ENCODE measurements at regions of chr6 and their contacts with region 1.

Region 1: DNA sequence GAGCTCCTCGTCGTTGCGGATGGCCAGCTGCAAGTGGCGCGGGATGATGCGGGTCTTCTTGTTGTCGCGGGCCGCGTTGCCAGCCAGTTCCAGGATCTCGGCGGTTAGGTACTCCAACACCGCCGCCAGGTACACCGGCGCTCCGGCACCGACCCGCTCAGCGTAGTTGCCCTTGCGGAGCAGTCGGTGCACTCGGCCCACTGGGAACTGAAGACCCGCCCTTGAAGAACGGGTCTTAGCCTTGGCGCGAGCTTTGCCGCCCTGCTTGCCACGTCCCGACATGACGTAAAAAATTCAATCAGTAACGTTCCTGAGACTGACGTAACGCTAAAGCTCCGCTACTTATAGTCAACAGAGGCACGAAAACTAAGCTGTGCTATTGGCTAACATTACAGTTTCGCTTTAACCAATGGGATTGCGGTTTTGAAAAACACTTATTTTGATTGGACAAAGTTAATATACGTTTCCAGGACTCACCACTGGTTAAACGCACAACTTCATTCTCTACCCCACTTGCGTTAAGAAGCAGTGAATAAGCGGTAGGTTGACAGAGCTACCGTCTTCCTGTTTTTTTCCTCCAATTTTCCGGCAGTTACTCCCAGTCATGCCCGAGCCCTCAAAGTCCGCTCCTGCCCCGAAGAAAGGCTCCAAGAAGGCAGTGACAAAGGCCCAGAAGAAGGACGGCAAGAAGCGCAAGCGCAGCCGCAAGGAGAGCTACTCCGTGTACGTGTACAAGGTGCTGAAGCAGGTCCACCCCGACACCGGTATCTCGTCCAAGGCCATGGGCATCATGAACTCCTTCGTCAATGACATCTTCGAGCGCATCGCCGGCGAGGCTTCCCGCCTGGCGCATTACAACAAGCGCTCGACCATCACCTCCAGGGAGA is 73.9 kb downstream of the OR2B2 start:
- DNase-seq: peak; percentile 91 to 94 (median 92)
- H3K4me3 ChIP-seq: peak overlapping the region; percentile 63 to 67
- H3K4me3 Mint-ChIP-seq: no peak overlapping the region
- H3K27ac ChIP-seq: peak overlapping the region; percentile 93
- H3K27ac Mint-ChIP-seq: no peak overlapping the region
- H3K4me1 ChIP-seq: peaks cover 30% of the 10 kb centered on the region
- H3K4me1 Mint-ChIP-seq: peaks cover 6 to 20% (median 12%) of the 10 kb centered on the region in 4 donors
- H3K27me3 ChIP-seq: no peaks in the 10 kb centered on the region
- H3K27me3 Mint-ChIP-seq: peaks cover 2 to 3% of the 10 kb centered on the region in 2 donors

Region 2: GRCh38 chr6:26054857-26055669 is 1783.2 kb before region 1 on chr6:
- CTCF ChIA-PET with region 1: no interaction called
- POLR2A ChIA-PET with region 1: interaction called, 22 read pairs
- intact Hi-C with region 1: no loop called
- DNase-seq: peak; percentile 89 to 96 (median 91)
- H3K4me3 ChIP-seq: peak overlapping the region; percentile 67 to 78
- H3K4me3 Mint-ChIP-seq: peak overlapping the region; percentile 93 to 96 (median 94)
- H3K27ac ChIP-seq: peak overlapping the region; percentile 84
- H3K27ac Mint-ChIP-seq: peak overlapping the region; percentile 91 to 98 (median 98)
- H3K4me1 ChIP-seq: peaks cover 24% of the 10 kb centered on the region
- H3K4me1 Mint-ChIP-seq: peaks cover 7 to 34% (median 15%) of the 10 kb centered on the region in 4 donors
- H3K27me3 ChIP-seq: no peaks in the 10 kb centered on the region
- H3K27me3 Mint-ChIP-seq: no peaks in the 10 kb centered on the region

Region 3: GRCh38 chr6:26223650-26224546 is 1614.4 kb before region 1 on chr6:
- CTCF ChIA-PET with region 1: no interaction called
- POLR2A ChIA-PET with region 1: interaction called, 16 read pairs
- intact Hi-C with region 1: no loop called
- DNase-seq: peak; percentile 74 to 87 (median 84)
- H3K4me3 ChIP-seq: peak overlapping the region; percentile 45 to 82
- H3K4me3 Mint-ChIP-seq: no peak overlapping the region
- H3K27ac ChIP-seq: peak overlapping the region; percentile 69
- H3K27ac Mint-ChIP-seq: no peak overlapping the region
- H3K4me1 ChIP-seq: peaks cover 21% of the 10 kb centered on the region
- H3K4me1 Mint-ChIP-seq: peaks cover 6 to 8% (median 7%) of the 10 kb centered on the region in 4 donors
- H3K27me3 ChIP-seq: no peaks in the 10 kb centered on the region
- H3K27me3 Mint-ChIP-seq: no peaks in the 10 kb centered on the region

Region 4: DNA sequence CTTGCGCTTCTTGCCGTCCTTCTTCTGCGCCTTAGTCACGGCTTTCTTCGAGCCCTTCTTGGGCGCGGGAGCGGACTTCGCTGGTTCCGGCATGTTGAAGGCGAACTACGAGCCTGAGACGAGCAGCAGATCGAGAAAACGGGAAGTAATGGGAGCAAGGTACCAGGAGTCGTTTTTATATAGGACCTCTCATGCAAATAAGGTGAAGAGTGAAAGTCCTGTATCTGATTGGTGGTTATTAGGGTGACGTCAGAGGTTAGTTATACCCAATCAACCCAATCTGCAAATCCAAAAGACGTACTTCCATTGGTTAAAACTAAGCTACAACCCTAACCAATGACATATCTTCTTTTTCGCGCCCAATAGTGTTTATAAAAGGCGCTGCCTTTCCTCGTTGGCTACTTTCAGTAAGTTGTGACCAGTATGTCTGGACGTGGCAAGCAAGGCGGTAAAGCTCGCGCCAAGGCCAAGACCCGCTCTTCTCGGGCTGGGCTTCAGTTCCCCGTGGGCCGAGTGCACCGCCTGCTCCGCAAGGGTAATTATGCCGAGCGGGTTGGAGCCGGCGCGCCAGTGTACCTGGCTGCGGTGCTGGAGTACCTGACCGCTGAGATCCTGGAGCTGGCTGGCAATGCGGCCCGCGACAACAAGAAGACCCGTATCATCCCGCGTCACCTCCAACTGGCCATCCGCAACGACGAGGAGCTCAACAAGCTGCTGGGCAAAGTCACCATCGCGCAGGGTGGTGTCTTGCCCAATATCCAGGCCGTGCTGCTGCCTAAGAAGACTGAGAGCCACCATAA is 691.4 kb before region 1 on chr6:
- CTCF ChIA-PET with region 1: no interaction called
- POLR2A ChIA-PET with region 1: interaction called, 73 read pairs
- intact Hi-C with region 1: loop called (anchors 1 kb)
- DNase-seq: peak; percentile 85 to 96 (median 94)
- H3K4me3 ChIP-seq: peak overlapping the region; percentile 76 to 77
- H3K4me3 Mint-ChIP-seq: no peak overlapping the region
- H3K27ac ChIP-seq: peak overlapping the region; percentile 97
- H3K27ac Mint-ChIP-seq: no peak overlapping the region
- H3K4me1 ChIP-seq: peaks cover 22% of the 10 kb centered on the region
- H3K4me1 Mint-ChIP-seq: peaks cover 10 to 20% (median 13%) of the 10 kb centered on the region in 4 donors
- H3K27me3 ChIP-seq: no peaks in the 10 kb centered on the region
- H3K27me3 Mint-ChIP-seq: no peaks in the 10 kb centered on the region

Region 5: GRCh38 chr6:27617700-27618689 is 220.3 kb before region 1 on chr6:
- CTCF ChIA-PET with region 1: no interaction called
- POLR2A ChIA-PET with region 1: no interaction called
- intact Hi-C with region 1: no loop called
- DNase-seq: no peak
- H3K4me3 ChIP-seq: no peak overlapping the region
- H3K4me3 Mint-ChIP-seq: peak overlapping the region in 2 of 8 donors; percentile 30 to 32
- H3K27ac ChIP-seq: no peak overlapping the region
- H3K27ac Mint-ChIP-seq: no peak overlapping the region
- H3K4me1 ChIP-seq: peaks cover 6% of the 10 kb centered on the region
- H3K4me1 Mint-ChIP-seq: peaks cover 6 to 14% (median 11%) of the 10 kb centered on the region in 4 donors
- H3K27me3 ChIP-seq: peaks cover 7% of the 10 kb centered on the region
- H3K27me3 Mint-ChIP-seq: peaks cover 45 to 49% of the 10 kb centered on the region in 2 donors

Region 6: GRCh38 chr6:27795697-27796494 is 42.4 kb before region 1 on chr6:
- CTCF ChIA-PET with region 1: interaction called, 17 read pairs
- POLR2A ChIA-PET with region 1: interaction called, 8 read pairs
- intact Hi-C with region 1: no loop called
- DNase-seq: peak; percentile 75 to 82 (median 80)
- H3K4me3 ChIP-seq: no peak overlapping the region
- H3K4me3 Mint-ChIP-seq: peak overlapping the region in 1 of 8 donors; percentile 16
- H3K27ac ChIP-seq: no peak overlapping the region
- H3K27ac Mint-ChIP-seq: peak overlapping the region in 5 of 7 donors; percentile 6 to 91 (median 35)
- H3K4me1 ChIP-seq: peaks cover 21% of the 10 kb centered on the region
- H3K4me1 Mint-ChIP-seq: peaks cover 17 to 29% (median 21%) of the 10 kb centered on the region in 4 donors
- H3K27me3 ChIP-seq: peaks cover 6% of the 10 kb centered on the region
- H3K27me3 Mint-ChIP-seq: peaks cover 6 to 13% of the 10 kb centered on the region in 2 donors

Region 7: DNA sequence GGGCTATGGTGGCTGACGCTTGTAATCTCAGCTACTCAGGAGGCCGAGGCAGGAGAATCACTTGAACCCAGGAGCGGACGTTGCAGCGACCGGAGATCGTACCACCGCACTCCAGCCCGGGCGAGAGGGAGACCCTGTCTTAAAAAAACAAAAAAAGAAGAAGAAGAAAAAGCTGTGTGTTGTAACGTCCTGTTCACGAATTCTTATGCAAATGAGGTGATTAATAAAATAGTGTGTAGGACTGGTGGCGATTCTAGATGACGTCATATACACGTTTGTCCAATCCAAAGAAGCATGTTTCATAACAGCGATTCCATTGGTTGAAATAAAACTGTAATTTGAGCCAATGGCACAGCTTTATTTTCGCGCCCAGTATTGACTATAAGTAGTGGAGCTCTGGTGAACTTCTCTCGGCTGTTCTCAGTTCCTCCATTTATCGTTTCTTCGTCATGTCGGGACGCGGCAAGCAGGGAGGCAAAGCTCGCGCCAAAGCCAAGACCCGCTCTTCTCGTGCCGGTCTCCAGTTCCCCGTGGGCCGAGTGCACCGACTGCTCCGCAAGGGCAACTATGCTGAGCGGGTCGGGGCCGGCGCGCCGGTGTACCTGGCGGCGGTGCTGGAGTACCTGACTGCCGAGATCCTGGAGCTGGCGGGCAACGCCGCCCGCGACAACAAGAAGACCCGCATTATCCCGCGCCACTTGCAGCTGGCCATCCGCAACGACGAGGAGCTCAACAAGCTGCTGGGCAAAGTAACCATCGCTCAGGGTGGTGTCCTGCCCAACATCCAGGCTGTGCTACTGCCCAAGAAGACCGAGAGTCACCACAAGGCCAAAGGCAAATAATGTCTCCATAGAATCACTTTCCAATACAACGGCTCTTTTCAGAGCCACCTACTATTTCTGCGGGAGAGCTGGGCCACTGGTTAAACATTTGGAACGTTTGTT is 26.9 kb after region 1 on chr6:
- CTCF ChIA-PET with region 1: interaction called, 173 read pairs
- POLR2A ChIA-PET with region 1: interaction called, 1,261 read pairs
- intact Hi-C with region 1: loop called (anchors 1 kb)
- DNase-seq: peak; percentile 86 to 93 (median 91)
- H3K4me3 ChIP-seq: peak overlapping the region; percentile 33 to 69
- H3K4me3 Mint-ChIP-seq: peak overlapping the region; percentile 96 to 99 (median 99)
- H3K27ac ChIP-seq: peak overlapping the region; percentile 62
- H3K27ac Mint-ChIP-seq: peak overlapping the region; percentile 94 to 99 (median 98)
- H3K4me1 ChIP-seq: peaks cover 31% of the 10 kb centered on the region
- H3K4me1 Mint-ChIP-seq: peaks cover 18 to 46% (median 34%) of the 10 kb centered on the region in 4 donors
- H3K27me3 ChIP-seq: no peaks in the 10 kb centered on the region
- H3K27me3 Mint-ChIP-seq: no peaks in the 10 kb centered on the region

Measured in CD4-positive, alpha-beta memory T cell (primary cell).